ENCODE measurements at regions of chr1 and their contacts with region 1.

Region 1: GRCh38 chr1:21368515-21369289 is 71.2 kb upstream of the NBPF3 start:
- DNase-seq: peak; percentile 55
- H3K4me3 ChIP-seq: no peak overlapping the region
- H3K27ac ChIP-seq: no peak overlapping the region
- H3K4me1 ChIP-seq: no peaks in the 10 kb centered on the region
- CTCF ChIP-seq: peak; percentile 99

Region 2: DNA sequence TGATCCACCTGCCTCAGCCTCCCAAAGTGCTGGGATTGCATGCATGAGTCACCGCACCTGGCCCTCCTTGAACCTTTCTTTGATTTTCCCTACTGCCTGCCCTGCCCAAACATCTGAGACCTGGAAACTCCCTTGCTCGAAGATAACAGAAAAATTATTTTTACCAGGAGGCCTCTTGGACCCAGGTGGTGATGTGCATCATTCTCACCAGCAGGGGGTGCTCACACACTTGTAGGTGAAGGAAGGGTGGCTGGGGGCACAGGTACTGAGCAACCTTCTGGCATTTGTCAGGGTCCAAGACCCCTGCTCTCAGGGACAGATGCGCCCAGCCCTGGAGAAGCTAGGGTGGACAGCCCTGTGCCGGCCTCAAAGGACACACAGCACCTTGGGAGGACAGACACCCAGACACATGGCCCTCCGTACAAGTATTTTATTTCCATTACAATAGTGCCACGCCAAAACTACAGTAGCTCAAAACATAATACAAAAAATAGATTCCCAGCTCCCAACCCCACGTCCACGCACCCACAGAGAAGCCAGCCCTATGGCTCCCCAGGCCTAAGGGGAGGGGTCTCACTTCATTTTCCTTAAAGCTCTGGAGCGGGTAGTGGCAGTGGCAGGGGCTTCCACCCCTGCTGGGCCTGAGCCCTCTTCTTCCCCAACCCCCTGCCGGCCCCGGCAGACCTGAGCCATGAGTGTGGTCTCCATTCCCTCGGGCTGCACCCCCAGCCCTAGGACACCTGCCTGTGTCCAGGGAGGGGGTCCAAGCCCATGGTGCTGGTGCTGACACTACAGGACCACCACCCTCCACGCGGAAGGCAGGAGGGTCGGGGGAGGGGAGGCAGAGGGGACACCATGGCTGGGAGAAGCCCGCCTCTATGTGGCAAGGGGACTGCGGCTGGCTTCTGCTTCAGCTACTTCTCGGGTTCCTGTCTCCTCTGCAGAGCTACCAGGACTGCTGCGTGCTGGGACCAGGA is 151.6 kb before region 1 on chr1:
- CTCF ChIA-PET with region 1: no interaction called
- POLR2A ChIA-PET with region 1: no interaction called
- intact Hi-C with region 1: loop called (anchors 5 kb)
- DNase-seq: peak; percentile 71
- H3K4me3 ChIP-seq: no peak overlapping the region
- H3K27ac ChIP-seq: no peak overlapping the region
- H3K4me1 ChIP-seq: peaks cover 6% of the 10 kb centered on the region
- CTCF ChIP-seq: peak; percentile 94

Region 3: DNA sequence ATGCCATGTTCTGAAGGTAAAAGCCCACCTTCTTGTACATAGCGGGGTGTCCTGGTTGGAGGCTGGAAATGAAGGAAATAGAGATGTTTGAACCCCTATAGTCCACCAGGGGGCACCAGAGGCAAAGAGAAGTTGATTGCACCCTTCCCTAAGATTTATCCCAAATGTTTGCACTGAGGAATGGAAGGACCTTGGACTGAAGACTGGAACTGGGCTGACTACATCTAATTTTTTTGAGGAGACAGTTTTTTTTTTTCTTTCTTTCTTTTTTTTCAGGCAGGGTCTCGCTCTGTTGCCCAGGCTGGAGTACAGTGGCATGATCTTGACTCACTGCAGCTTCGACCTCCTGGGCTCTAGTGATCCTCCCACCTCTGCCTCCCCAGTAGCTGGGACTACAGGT is 136.7 kb before region 1 on chr1:
- CTCF ChIA-PET with region 1: interaction called, 5 read pairs
- POLR2A ChIA-PET with region 1: no interaction called
- intact Hi-C with region 1: loop called (anchors 1 kb)
- DNase-seq: peak; percentile 45
- H3K4me3 ChIP-seq: no peak overlapping the region
- H3K27ac ChIP-seq: no peak overlapping the region
- H3K4me1 ChIP-seq: no peaks in the 10 kb centered on the region
- CTCF ChIP-seq: peak; percentile 94

Region 4: DNA sequence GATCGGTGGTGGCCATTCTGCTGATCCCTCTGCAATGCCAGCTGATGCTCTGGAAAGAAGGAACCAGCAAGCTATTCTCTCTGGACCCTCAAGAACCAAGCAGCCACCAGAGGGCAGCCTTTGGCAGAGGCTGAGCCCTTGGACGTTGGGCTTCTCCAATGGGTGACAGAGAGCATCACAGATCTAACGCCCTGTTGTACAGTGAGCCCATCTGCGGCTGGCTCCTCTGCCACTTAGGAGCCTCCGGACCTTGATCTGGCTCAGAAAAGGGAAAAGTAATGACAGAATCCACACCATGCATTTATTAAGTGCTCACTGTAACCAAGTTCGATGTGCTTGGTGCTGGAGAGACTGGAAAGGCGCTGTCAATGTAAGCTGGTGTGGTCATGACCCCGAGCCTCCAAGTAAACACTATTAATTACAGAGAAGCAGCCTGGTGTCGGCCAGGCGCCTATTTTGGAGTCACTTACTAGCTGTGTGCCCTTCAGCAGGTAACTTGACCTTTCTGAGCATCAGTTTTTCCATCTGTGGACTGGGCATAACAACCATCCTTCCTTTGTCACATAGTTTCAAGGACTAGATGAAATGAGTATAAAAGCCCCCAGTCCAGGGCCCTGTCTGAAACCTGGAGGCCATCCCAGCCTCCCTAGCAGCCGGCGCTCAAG is 113.3 kb before region 1 on chr1:
- CTCF ChIA-PET with region 1: interaction called, 8 read pairs
- POLR2A ChIA-PET with region 1: no interaction called
- intact Hi-C with region 1: loop called (anchors 1 kb)
- DNase-seq: peak; percentile 87
- H3K4me3 ChIP-seq: no peak overlapping the region
- H3K27ac ChIP-seq: no peak overlapping the region
- H3K4me1 ChIP-seq: peaks cover 5% of the 10 kb centered on the region
- CTCF ChIP-seq: peak; percentile 94